Right ventricle myocardium superior (tissue), 1 donor: ENCODE measurements at regions of chr4 and their contacts with region 1.

Region 1: GRCh38 chr4:90293320-90293719 is 166.1 kb downstream of the CCSER1 start:
- DNase-seq: no peak
- ATAC-seq: no peak

Region 2: DNA sequence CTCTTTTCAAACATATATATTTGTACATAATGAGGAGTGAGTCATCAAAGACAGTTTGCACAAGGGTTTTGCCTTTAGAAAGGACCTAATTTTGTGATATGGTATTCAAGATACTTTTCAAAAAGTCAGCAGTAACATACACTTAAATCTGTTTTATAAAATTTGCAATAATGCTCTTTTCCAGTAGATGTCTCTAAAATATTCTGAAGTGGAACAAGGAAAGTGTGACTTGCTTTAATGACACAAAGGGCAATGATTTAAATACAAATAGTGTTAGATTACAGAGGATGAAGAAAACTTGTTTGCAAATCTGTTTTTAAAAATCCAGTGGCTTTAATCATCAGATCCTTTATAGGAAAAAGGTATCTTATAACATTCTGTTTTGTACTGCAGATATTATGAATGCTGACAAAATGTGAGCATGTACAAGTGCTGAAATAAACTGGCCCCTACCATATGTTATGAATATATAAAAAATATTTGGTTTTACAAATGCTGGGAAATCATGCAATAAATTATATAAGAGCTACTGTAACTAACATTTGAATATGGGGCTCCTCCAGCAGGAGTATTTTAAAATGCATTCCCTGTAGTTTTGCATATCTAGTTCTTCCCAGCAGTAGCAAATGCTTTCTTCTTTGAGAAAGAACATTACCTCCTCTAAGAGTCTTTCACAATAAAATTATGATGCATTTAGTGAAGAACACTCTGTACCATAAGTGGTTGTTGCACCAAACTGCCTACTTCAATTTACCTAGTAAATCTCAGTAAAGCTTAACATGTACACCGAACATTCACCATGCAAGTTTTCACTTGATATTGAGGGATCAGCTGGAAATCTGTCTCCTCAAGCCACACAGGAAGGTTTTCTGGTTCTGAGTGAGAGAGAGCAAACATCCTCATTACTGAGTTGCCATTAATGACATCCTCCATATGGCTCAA is 378.4 kb before region 1 on chr4:
- intact Hi-C with region 1: no loop called
- DNase-seq: no peak
- ATAC-seq: no peak

Region 3: DNA sequence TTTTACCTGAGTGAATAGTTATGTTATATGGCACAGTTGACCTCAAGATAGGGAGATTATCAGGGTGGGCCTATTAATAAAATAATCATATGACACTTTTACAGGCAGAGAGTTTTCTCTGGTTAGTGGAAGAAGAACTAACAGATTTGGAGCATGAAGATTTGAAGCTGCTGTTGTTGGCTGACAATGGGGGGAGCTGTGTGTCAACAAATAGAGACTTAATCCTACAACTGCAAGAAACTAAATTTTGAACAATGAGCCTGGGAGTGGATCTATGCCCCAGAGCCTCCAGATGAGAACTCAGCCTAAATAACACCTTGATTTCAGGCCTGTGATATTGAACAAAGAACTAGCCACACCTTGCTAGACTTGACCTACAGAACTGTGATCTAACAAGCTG is 173.3 kb before region 1 on chr4:
- intact Hi-C with region 1: loop called (anchors 5 kb)
- DNase-seq: no peak
- ATAC-seq: peak; percentile 63

Region 4: GRCh38 chr4:90215286-90216039 is 77.9 kb before region 1 on chr4:
- intact Hi-C with region 1: no loop called
- DNase-seq: no peak
- ATAC-seq: no peak

Region 5: GRCh38 chr4:90403781-90404180 is 110.5 kb after region 1 on chr4:
- intact Hi-C with region 1: no loop called
- DNase-seq: no peak
- ATAC-seq: no peak